Caco-2 (cell line): ENCODE measurements at regions of chr11 and their contacts with region 1.

Region 1: GRCh38 chr11:101428918-101429317 is 154.9 kb downstream of the TRPC6 start:
- DNase-seq: peak in 1 of 2 experiments; percentile 65
- H3K4me3 ChIP-seq: no peak overlapping the region
- H3K4me3 Mint-ChIP-seq: peak overlapping the region; percentile 10
- H3K27ac Mint-ChIP-seq: no peak overlapping the region
- H3K4me1 ChIP-seq: peaks cover 22% of the 10 kb centered on the region
- H3K4me1 Mint-ChIP-seq: peaks cover 23% of the 10 kb centered on the region
- H3K27me3 ChIP-seq: no peaks in the 10 kb centered on the region
- H3K27me3 Mint-ChIP-seq: no peaks in the 10 kb centered on the region
- CTCF ChIP-seq: peak; percentile 74 to 79

Region 2: GRCh38 chr11:101346591-101346990 is 82.3 kb before region 1 on chr11:
- CTCF ChIA-PET with region 1: no interaction called
- POLR2A ChIA-PET with region 1: no interaction called
- intact Hi-C with region 1: no loop called
- DNase-seq: no peak
- H3K4me3 ChIP-seq: no peak overlapping the region
- H3K4me3 Mint-ChIP-seq: no peak overlapping the region
- H3K27ac Mint-ChIP-seq: no peak overlapping the region
- H3K4me1 ChIP-seq: no peaks in the 10 kb centered on the region
- H3K4me1 Mint-ChIP-seq: no peaks in the 10 kb centered on the region
- H3K27me3 ChIP-seq: no peaks in the 10 kb centered on the region
- H3K27me3 Mint-ChIP-seq: peaks cover 11% of the 10 kb centered on the region
- CTCF ChIP-seq: no peak

Region 3: DNA sequence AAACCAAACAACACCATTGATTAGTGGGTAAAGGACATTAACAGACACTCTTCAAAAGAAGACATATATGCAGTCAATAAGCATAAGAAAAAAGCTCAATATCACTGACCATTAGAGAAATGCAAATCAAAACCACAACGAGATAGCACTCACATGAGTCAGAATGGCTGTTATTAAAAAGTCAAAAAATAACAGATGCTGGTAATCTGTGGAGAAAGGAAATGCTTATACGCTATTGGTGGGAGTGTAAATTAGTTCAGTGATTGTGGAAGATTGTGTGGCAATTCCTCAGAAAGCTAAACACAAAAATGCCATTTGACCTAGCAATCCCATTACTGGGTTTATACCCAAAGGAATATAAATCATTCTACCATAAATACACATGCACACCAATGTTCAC is 27.7 kb before region 1 on chr11:
- CTCF ChIA-PET with region 1: no interaction called
- POLR2A ChIA-PET with region 1: no interaction called
- intact Hi-C with region 1: no loop called
- DNase-seq: no peak
- H3K4me3 ChIP-seq: no peak overlapping the region
- H3K4me3 Mint-ChIP-seq: no peak overlapping the region
- H3K27ac Mint-ChIP-seq: no peak overlapping the region
- H3K4me1 ChIP-seq: no peaks in the 10 kb centered on the region
- H3K4me1 Mint-ChIP-seq: no peaks in the 10 kb centered on the region
- H3K27me3 ChIP-seq: no peaks in the 10 kb centered on the region
- H3K27me3 Mint-ChIP-seq: peaks cover 12% of the 10 kb centered on the region
- CTCF ChIP-seq: no peak

Region 4: DNA sequence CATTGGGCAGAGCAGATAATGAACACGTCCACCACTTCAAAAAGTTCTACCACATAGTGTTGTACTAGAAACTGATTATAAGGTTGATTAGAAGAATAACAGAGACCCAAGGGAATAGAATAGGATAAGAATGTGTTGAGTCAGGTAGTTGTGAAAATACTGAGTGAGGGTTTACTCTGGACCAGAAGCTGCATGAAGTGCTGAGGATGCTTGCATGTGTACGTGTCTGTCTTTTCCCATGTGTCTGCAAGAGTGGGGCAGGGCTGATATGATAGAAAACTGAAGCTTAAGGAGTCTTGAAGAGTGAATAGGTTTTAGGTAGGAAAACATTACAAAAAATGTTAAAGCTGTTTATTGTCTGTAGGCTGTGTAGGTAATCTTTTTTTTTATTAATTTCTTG is 134.2 kb after region 1 on chr11:
- CTCF ChIA-PET with region 1: no interaction called
- POLR2A ChIA-PET with region 1: no interaction called
- intact Hi-C with region 1: no loop called
- DNase-seq: no peak
- H3K4me3 ChIP-seq: no peak overlapping the region
- H3K4me3 Mint-ChIP-seq: no peak overlapping the region
- H3K27ac Mint-ChIP-seq: no peak overlapping the region
- H3K4me1 ChIP-seq: peaks cover 7% of the 10 kb centered on the region; the same call in 1 of the 2 replicates
- H3K4me1 Mint-ChIP-seq: no peaks in the 10 kb centered on the region
- H3K27me3 ChIP-seq: no peaks in the 10 kb centered on the region
- H3K27me3 Mint-ChIP-seq: peaks cover 5% of the 10 kb centered on the region
- CTCF ChIP-seq: no peak

Region 5: GRCh38 chr11:101620026-101620425 is 191.1 kb after region 1 on chr11:
- CTCF ChIA-PET with region 1: interaction called, 4 read pairs
- POLR2A ChIA-PET with region 1: no interaction called
- intact Hi-C with region 1: loop called (anchors 2 kb)
- DNase-seq: no peak
- H3K4me3 ChIP-seq: no peak overlapping the region
- H3K4me3 Mint-ChIP-seq: no peak overlapping the region
- H3K27ac Mint-ChIP-seq: no peak overlapping the region
- H3K4me1 ChIP-seq: no peaks in the 10 kb centered on the region
- H3K4me1 Mint-ChIP-seq: no peaks in the 10 kb centered on the region
- H3K27me3 ChIP-seq: no peaks in the 10 kb centered on the region; the same call in 1 of the 2 replicates
- H3K27me3 Mint-ChIP-seq: peaks cover under 1% of the 10 kb centered on the region
- CTCF ChIP-seq: peak; percentile 28 to 39